Activated B cell treated with CpG ODN at 0.5 μM for 24 hours (primary cell): ENCODE measurements at regions of chr11 and their contacts with region 1.

Region 1: GRCh38 chr11:6746086-6746618 is 25.6 kb downstream of the OR2AG2 start:
- DNase-seq: peak; percentile 24
- ATAC-seq: peak; percentile 80
- H3K4me3 Mint-ChIP-seq: no peak overlapping the region
- H3K27ac Mint-ChIP-seq: no peak overlapping the region
- H3K4me1 Mint-ChIP-seq: peaks cover 2% of the 10 kb centered on the region
- H3K27me3 Mint-ChIP-seq: no peaks in the 10 kb centered on the region
- CTCF ChIP-seq: no peak

Region 2: DNA sequence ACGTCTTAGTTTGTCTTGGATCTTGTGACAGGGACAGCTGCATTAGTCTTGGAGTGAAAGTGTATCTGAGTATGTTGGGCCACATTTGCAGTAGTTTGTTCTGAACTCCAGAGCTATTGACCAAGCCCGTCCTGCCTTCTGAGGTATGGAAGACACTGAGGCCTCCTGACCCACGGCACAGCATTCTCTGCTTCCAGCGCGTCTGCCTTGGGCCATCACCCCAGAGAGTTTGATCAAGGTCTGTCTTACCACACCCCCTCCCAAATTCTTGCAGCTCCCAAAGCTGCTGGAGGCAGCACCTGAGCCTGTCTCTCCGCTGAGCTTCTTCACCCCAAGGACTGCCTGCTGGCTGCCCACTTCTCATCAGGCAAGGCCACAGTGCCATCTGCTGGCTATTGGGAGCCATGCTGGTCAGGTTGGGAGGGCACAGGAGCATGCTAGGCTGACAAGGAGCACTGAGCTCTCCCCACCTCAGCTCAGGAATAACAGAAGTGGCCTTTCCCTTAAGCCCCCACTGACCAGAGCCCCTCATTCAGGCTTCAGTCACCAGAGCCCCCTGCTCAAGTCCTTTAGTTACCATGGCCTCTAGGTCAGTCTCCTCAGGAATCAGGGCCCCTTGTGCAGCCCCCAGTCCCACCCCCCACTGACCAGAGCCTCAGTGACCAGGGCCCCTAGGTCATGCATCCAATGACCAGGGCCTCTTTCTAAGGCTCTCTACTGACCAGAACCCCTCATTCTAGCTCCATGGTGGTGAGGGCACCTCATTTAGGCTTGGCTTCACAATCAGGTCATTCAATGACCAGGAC is 383.1 kb before region 1 on chr11:
- CTCF ChIA-PET with region 1: no interaction called
- POLR2A ChIA-PET with region 1: no interaction called
- intact Hi-C with region 1: no loop called
- DNase-seq: peak; percentile 26
- ATAC-seq: peak; percentile 82
- H3K4me3 Mint-ChIP-seq: no peak overlapping the region
- H3K27ac Mint-ChIP-seq: no peak overlapping the region
- H3K4me1 Mint-ChIP-seq: no peaks in the 10 kb centered on the region
- H3K27me3 Mint-ChIP-seq: no peaks in the 10 kb centered on the region
- CTCF ChIP-seq: no peak

Region 3: GRCh38 chr11:6389921-6390724 is 356.0 kb before region 1 on chr11 and contains the start of gene SMPD1:
- CTCF ChIA-PET with region 1: no interaction called
- POLR2A ChIA-PET with region 1: interaction called, 4 read pairs
- intact Hi-C with region 1: loop called (anchors 2 kb)
- DNase-seq: peak; percentile 86
- ATAC-seq: peak; percentile 93
- H3K4me3 Mint-ChIP-seq: peak within 1 kb of the TSS; percentile 95
- H3K27ac Mint-ChIP-seq: peak within 1 kb of the TSS; percentile 99
- H3K4me1 Mint-ChIP-seq: peaks cover 36% of the 10 kb centered on the region
- H3K27me3 Mint-ChIP-seq: no peaks in the 10 kb centered on the region
- CTCF ChIP-seq: no peak
- total RNA-seq, gene SMPD1: 14.1 and 16.9 TPM in 2 replicates

Region 4: DNA sequence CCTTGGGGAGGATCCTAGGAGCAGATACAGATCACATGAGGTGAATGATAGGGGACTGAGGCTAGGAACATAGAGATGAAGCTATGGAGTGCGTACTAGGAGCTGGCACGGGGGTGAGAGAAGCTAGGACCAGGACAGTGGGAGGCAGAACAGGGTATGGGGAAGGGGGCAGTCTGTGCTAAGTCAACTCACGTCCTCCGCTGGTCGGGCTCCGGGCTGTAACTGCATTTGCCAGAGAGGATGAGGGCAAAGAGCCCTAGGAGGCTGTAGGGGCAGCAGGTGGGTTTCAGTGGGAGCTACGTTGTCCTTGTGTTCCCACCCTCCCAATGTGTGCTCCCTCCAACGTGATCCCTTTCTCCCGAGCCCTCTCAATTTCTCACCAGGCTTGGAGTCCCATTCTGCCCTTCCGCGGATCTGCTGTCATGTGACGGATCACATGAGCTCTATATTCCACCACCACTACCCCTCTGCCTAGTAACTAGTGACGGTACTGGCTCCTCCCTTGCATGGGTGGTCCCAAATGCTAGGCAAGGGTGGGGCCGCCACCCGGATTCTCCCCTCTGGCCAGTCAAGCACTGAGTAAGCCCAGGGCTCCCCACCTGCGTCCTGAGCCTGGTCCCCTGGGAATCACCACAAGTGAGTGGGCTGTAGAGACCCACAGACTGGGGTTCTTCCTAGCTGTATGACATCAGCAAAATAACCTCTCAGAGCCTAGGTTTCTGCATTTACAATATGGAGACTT is 127.0 kb before region 1 on chr11 and contains the start of gene TPP1:
- CTCF ChIA-PET with region 1: no interaction called
- POLR2A ChIA-PET with region 1: interaction called, 14 read pairs
- intact Hi-C with region 1: no loop called
- DNase-seq: peak; percentile 87
- ATAC-seq: peak; percentile 89
- H3K4me3 Mint-ChIP-seq: no peak within 1 kb of the TSS
- H3K27ac Mint-ChIP-seq: no peak within 1 kb of the TSS
- H3K4me1 Mint-ChIP-seq: peaks cover 7% of the 10 kb centered on the region
- H3K27me3 Mint-ChIP-seq: no peaks in the 10 kb centered on the region
- CTCF ChIP-seq: no peak
- total RNA-seq, gene TPP1: 98.2 and 123 TPM in 2 replicates

Region 5: GRCh38 chr11:6771926-6772893 is 26.1 kb after region 1 on chr11 and contains the start of gene OR2AG2:
- CTCF ChIA-PET with region 1: interaction called, 4 read pairs
- POLR2A ChIA-PET with region 1: interaction called, 11 read pairs
- intact Hi-C with region 1: no loop called
- DNase-seq: no peak
- ATAC-seq: peak; percentile 98
- H3K4me3 Mint-ChIP-seq: no peak within 1 kb of the TSS
- H3K27ac Mint-ChIP-seq: peak within 1 kb of the TSS; percentile 76
- H3K4me1 Mint-ChIP-seq: peaks cover 12% of the 10 kb centered on the region
- H3K27me3 Mint-ChIP-seq: no peaks in the 10 kb centered on the region
- CTCF ChIP-seq: no peak
- total RNA-seq, gene OR2AG2: 0.07 TPM in 1 of 2 replicates, not detected in the other